GM10248 (cell line): ENCODE measurements at regions of chr11 and their contacts with region 1.

Region 1: DNA sequence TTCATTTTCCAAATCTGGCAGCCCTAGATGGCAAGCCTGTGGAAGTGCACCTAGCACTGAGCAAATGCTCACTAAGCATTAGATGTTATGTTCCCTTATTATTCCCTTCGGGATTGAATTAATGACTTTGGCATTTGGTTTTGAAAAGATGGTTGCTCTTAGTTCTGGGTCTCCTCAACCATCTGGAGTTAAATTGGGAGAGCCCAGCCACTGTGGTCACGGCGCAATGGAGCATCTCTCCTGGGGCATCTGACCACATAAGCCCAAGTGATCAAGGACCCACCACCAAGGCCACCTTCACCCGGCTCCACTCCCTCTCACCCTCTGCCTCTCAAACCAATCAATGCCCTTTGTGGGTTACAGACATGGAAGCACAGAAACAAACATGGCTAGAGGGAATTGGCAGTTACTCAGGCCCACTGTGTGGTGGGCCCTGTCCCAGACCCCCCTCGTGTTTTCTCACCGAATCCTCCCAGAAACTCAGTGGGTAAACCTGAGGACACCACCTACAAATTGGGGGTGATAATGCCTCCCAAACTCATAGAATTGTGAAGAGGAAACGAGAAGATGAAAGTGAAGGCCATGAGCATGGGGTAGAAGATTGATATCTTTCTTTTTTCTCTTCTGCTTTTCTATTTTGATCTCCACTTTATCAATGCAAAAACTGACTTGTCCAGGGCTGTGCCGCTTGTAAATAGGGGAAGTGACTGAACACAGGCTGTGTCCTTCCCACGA is 52.2 kb downstream of the IRAG1 start:
- DNase-seq: peak; percentile 74
- CTCF ChIP-seq: no peak

Region 2: GRCh38 chr11:10584071-10584501 is 57.3 kb before region 1 on chr11:
- CTCF ChIA-PET with region 1: no interaction called
- POLR2A ChIA-PET with region 1: no interaction called
- DNase-seq: no peak
- CTCF ChIP-seq: no peak

Region 3: GRCh38 chr11:10623797-10624761 is 17.3 kb before region 1 on chr11:
- CTCF ChIA-PET with region 1: interaction called, 23 read pairs
- POLR2A ChIA-PET with region 1: no interaction called
- DNase-seq: peak; percentile 67
- CTCF ChIP-seq: peak; percentile 31

Region 4: GRCh38 chr11:10673501-10674062 is 32.2 kb after region 1 on chr11:
- CTCF ChIA-PET with region 1: no interaction called
- POLR2A ChIA-PET with region 1: no interaction called
- DNase-seq: no peak
- CTCF ChIP-seq: no peak